ENCODE measurements at regions of chr11 and their contacts with region 1.

Region 1: GRCh38 chr11:102614485-102614884 is 10.6 kb downstream of the MMP20 start:
- DNase-seq: peak in 1 of 2 experiments; percentile 52
- ATAC-seq: peak; percentile 51 to 52; a peak in 3 of 6 replicates
- H3K4me3 ChIP-seq: no peak overlapping the region
- H3K27ac ChIP-seq: peak overlapping the region in 1 of 2 experiments; percentile 84; a peak in 3 of 6 replicates
- H3K4me1 ChIP-seq: peaks cover 41% of the 10 kb centered on the region
- CTCF ChIP-seq: peak; percentile 31; the same call in 2 of the 3 replicates
- EP300 ChIP-seq: no peak
- POLR2A ChIP-seq: no peak
- RAD21 ChIP-seq: peak; percentile 55 to 58

Region 2: GRCh38 chr11:102287964-102288724 is 326.3 kb before region 1 on chr11:
- CTCF ChIA-PET with region 1: interaction called, 20 read pairs
- POLR2A ChIA-PET with region 1: no interaction called
- DNase-seq: peak; percentile 66 to 80
- ATAC-seq: peak; percentile 89 to 95
- H3K4me3 ChIP-seq: no peak overlapping the region; the same call in 2 of the 3 replicates
- H3K27ac ChIP-seq: peak overlapping the region; percentile 57 to 72; a peak in 5 of 6 replicates
- H3K4me1 ChIP-seq: peaks cover 28% of the 10 kb centered on the region; the same call in 2 of the 3 replicates
- CTCF ChIP-seq: peak; percentile 70
- EP300 ChIP-seq: no peak
- POLR2A ChIP-seq: no peak
- RAD21 ChIP-seq: peak; percentile 76 to 83

Region 3: DNA sequence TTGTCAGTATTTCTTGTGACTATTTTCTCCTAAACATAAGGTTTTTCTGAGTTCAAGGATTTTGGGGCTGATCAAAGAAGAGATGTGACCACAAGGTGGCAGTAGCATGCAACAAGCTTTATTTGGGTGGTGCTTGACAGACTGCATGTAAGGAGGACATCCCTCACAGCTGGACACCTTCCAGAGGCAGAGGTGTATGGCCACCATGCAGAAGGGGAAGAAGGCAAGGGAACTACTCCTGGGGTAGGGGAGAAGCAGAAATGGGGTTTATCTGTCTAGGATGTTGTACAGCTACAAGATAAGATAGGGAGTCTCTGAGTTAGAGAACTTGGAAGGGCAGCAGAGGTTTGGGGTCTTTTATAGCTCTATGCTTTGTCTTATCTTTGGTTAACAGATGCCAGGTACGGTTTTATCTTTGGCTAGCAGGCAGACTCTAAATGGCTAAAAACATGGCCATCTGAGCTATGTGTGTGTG is 272.6 kb before region 1 on chr11:
- CTCF ChIA-PET with region 1: interaction called, 74 read pairs
- POLR2A ChIA-PET with region 1: no interaction called
- DNase-seq: peak; percentile 68 to 87
- ATAC-seq: peak; percentile 73 to 85
- H3K4me3 ChIP-seq: no peak overlapping the region
- H3K27ac ChIP-seq: no peak overlapping the region; a peak in 2 of 6 replicates
- H3K4me1 ChIP-seq: peaks cover 25% of the 10 kb centered on the region
- CTCF ChIP-seq: peak; percentile 79
- EP300 ChIP-seq: no peak
- POLR2A ChIP-seq: no peak
- RAD21 ChIP-seq: peak; percentile 72 to 83

Region 4: DNA sequence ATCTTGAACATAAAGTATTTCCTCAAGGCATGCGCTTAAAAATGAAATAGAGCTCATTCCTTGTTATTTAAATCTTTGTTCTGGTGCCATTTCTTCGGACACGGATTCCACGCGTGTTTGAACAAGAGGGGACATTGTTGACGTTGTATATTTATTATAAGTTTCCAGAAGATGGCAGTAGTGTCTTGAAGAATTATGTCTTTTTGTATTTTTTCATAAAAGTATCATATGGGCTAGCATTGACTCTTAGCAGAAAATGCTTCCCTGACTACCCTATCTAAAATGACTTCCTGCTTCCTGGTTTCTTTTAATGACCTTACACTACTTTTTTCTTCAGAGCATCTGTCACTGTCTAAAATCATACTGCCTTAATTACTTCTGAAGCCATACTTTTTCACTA is 247.1 kb before region 1 on chr11:
- CTCF ChIA-PET with region 1: interaction called, 60 read pairs
- POLR2A ChIA-PET with region 1: no interaction called
- DNase-seq: peak; percentile 10 to 29
- ATAC-seq: peak; percentile 39 to 69; a peak in 3 of 6 replicates
- H3K4me3 ChIP-seq: no peak overlapping the region
- H3K27ac ChIP-seq: no peak overlapping the region
- H3K4me1 ChIP-seq: no peaks in the 10 kb centered on the region; the same call in 2 of the 3 replicates
- CTCF ChIP-seq: peak; percentile 46
- EP300 ChIP-seq: no peak
- POLR2A ChIP-seq: no peak
- RAD21 ChIP-seq: peak; percentile 45 to 64

Region 5: DNA sequence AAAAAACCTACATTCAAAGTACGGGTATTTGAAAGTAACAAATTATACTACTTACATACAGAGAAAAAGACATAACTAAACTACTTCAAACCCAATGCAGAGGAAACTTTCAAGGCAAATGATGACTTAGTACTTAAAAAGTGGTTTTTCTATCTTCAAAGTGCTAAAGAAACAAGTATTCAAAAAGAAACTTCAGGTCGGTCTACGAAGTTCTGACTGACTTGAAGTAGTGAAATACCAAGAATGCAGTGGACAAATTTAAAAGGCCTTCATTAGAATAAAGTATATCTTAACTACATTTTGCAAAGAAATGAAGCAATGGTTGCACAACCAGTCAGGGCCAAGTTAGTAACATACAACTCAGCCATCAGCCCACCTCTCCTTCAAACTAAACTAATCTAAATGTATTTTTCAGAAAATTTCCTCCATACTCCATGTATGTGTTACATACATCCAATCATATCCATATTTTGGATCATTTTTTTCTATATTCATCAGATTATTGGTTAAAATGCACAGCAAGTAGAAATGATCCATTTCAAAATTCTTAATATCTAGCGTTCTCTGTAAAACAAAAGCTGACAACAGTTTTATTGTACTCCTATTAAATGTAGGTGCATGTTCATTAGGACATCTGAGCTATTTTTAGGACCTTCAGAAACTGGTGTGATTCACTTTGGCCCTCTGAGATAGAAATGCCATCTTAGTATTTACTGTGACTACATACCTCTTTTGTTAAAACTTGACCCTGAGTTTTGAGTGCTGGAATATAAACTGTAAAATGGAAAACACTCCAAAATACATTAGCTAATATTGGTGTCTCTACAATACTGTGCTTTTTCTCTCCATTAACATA is 217.5 kb before region 1 on chr11:
- CTCF ChIA-PET with region 1: interaction called, 81 read pairs
- POLR2A ChIA-PET with region 1: no interaction called
- DNase-seq: no peak
- ATAC-seq: no peak
- H3K4me3 ChIP-seq: no peak overlapping the region
- H3K27ac ChIP-seq: no peak overlapping the region
- H3K4me1 ChIP-seq: peaks cover 17% of the 10 kb centered on the region
- CTCF ChIP-seq: no peak
- EP300 ChIP-seq: no peak
- POLR2A ChIP-seq: no peak
- RAD21 ChIP-seq: no peak

Region 6: DNA sequence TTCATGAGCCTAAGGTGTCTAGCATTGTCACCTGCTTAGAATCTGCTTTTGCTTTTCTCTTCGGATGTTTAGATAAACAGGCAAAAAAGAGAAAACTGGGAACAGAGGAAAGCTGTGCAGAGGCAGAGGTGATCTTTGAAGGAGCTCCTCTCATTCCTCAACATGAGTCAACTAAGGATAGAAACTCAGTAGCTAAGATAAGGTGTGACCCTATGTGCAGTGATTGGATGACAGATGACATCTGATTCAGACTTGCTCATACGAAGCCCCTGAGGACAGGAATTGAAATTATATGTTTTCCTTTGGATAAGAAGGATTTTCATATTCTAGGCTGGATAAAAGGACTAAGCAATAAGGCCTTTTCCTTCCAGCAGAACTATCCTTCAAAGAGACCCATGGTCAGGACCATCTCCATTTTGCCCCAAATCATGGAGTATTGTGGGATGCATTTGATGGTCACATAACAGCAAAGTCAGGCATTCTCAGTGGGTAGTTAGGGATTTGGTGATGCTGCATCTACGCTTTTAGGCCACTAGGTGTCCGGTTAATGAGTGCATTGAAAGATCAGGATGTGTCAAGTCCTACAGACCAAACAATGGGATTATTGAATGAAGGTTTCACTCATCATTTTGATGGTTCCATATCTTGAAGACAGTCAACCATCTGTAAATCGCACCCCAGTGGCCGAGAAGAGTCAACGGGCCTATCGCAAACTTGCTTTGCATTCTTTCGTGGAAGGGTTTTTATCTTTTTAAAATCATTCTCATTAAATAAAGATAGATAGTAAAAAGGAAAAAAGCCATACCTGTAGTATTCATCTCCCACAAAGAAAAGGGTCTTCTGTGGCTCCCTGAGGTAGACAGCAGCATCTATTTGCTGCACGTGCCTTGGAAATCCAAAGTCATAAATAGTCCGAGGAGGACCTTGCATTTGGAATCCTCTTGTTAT is 21.6 kb before region 1 on chr11:
- CTCF ChIA-PET with region 1: interaction called, 22 read pairs
- POLR2A ChIA-PET with region 1: no interaction called
- DNase-seq: peak in 1 of 2 experiments; percentile 56
- ATAC-seq: peak; percentile 54 to 89; a peak in 3 of 6 replicates
- H3K4me3 ChIP-seq: no peak overlapping the region
- H3K27ac ChIP-seq: peak overlapping the region in 1 of 2 experiments; percentile 49; a peak in 1 of 6 replicates
- H3K4me1 ChIP-seq: peaks cover 7% of the 10 kb centered on the region; the same call in 2 of the 3 replicates
- CTCF ChIP-seq: peak; percentile 22; the same call in 1 of the 3 replicates
- EP300 ChIP-seq: no peak
- POLR2A ChIP-seq: no peak
- RAD21 ChIP-seq: peak in 1 of 2 experiments; percentile 23; a peak in 1 of 5 replicates

Region 7: DNA sequence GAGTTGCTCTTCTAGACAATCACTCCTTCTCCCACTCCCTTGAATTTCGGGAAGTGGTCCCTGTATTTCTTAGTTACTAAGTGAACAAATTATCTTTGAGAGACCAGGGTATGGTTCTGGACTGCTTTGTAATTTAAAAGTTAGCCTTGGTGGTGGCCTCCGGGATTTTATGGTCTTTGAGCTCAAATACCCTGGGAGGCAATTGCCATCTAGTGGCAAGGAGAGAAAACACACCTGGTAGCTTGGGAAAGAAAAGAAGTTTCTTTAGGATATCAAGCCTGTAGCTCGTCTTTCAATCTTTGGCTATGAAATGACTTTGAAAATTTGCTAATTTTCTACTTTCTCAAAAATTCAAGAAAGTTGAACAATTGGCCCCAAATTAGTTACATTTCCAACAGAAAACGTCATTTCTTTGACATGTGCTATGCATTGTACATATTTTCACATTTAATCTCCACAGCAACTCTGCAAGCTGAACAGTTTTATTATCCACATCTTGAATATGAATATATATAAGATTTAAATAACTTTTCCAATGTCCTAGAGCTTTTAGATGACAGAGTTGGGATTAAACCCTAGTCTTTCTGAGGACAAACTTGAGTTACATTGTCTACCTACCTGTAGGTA is 52.0 kb after region 1 on chr11:
- CTCF ChIA-PET with region 1: interaction called, 29 read pairs
- POLR2A ChIA-PET with region 1: interaction called, 3 read pairs
- DNase-seq: peak; percentile 13 to 46
- ATAC-seq: peak; percentile 70 to 84; a peak in 5 of 6 replicates
- H3K4me3 ChIP-seq: no peak overlapping the region
- H3K27ac ChIP-seq: 0 out of 6 replicates have a peak overlapping the region, but pooled peaks of 1 of the 2 experiments have one; percentile 32
- H3K4me1 ChIP-seq: no peaks in the 10 kb centered on the region
- CTCF ChIP-seq: peak; percentile 78
- EP300 ChIP-seq: no peak
- POLR2A ChIP-seq: no peak
- RAD21 ChIP-seq: peak; percentile 86 to 87

Region 8: GRCh38 chr11:102709201-102709945 is 94.9 kb after region 1 on chr11:
- CTCF ChIA-PET with region 1: no interaction called
- POLR2A ChIA-PET with region 1: no interaction called
- DNase-seq: no peak
- ATAC-seq: no peak
- H3K4me3 ChIP-seq: no peak overlapping the region
- H3K27ac ChIP-seq: no peak overlapping the region
- H3K4me1 ChIP-seq: no peaks in the 10 kb centered on the region
- CTCF ChIP-seq: no peak
- EP300 ChIP-seq: no peak
- POLR2A ChIP-seq: no peak
- RAD21 ChIP-seq: no peak

Measured in A549 (cell line).